Ascending aorta (tissue), 2 donors: ENCODE measurements at regions of chr1 and their contacts with region 1.

Region 1: DNA sequence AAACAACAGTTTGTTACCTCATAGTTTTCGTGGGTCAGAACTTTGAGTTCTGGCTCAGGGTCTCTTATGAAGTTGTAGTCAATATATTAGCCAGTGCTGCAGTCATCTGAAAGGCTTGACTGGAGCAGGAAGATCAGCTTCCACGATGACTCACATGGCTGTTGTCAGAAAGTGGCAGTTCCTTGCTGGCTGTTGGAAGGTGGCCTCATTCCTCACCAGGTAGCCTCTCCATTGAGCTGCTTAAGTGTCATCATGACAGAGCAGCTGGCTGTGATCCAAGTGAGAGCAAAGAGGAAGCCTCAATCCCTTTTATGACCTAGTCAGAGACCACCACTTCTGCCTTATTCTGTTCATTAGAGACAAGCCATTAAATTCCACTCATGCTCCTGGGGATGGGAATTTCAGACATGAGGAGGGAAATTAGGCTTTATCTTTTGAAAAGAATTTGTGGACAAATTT is 5.6 kb downstream of the OSBPL9 start:
- DNase-seq: peak in 1 of 2 donors; percentile 87
- H3K4me3 ChIP-seq: no peak overlapping the region
- H3K27ac ChIP-seq: peak overlapping the region; percentile 54 to 91
- H3K4me1 ChIP-seq: peaks cover 5 to 36% of the 10 kb centered on the region in 2 donors
- H3K27me3 ChIP-seq: no peaks in the 10 kb centered on the region
- CTCF ChIP-seq: no peak

Region 2: GRCh38 chr1:51009381-51009780 is 613.1 kb before region 1 on chr1:
- intact Hi-C with region 1: no loop called
- DNase-seq: no peak
- H3K4me3 ChIP-seq: no peak overlapping the region
- H3K27ac ChIP-seq: no peak overlapping the region
- H3K4me1 ChIP-seq: no peaks in the 10 kb centered on the region
- H3K27me3 ChIP-seq: no peaks in the 10 kb centered on the region
- CTCF ChIP-seq: no peak

Region 3: DNA sequence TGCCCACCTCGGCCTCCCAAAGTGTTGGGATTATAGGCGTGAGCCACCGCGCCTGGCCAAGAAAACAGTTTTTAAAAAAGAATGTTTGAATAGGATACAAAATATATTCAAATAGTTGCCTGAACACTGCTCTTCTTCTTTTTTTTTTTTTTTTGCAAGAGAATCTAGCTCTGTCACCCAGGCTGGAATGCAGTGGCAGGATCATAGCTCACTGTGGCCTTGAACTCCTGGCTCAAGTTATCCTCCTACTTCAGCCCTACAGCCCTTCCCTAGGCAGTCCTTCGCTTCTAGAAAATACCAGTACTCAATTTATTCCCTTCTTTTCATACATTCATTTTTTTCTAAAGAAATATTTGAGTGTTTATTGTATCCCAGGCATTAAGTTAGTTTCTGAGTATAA is 62.3 kb after region 1 on chr1:
- intact Hi-C with region 1: loop called (anchors 5 kb)
- DNase-seq: no peak
- H3K4me3 ChIP-seq: no peak overlapping the region
- H3K27ac ChIP-seq: no peak overlapping the region
- H3K4me1 ChIP-seq: peaks cover 0 to 15% of the 10 kb centered on the region in 2 donors
- H3K27me3 ChIP-seq: no peaks in the 10 kb centered on the region
- CTCF ChIP-seq: no peak